CD8-positive, alpha-beta memory T cell (primary cell): ENCODE measurements at regions of chr11 and their contacts with region 1.

Region 1: DNA sequence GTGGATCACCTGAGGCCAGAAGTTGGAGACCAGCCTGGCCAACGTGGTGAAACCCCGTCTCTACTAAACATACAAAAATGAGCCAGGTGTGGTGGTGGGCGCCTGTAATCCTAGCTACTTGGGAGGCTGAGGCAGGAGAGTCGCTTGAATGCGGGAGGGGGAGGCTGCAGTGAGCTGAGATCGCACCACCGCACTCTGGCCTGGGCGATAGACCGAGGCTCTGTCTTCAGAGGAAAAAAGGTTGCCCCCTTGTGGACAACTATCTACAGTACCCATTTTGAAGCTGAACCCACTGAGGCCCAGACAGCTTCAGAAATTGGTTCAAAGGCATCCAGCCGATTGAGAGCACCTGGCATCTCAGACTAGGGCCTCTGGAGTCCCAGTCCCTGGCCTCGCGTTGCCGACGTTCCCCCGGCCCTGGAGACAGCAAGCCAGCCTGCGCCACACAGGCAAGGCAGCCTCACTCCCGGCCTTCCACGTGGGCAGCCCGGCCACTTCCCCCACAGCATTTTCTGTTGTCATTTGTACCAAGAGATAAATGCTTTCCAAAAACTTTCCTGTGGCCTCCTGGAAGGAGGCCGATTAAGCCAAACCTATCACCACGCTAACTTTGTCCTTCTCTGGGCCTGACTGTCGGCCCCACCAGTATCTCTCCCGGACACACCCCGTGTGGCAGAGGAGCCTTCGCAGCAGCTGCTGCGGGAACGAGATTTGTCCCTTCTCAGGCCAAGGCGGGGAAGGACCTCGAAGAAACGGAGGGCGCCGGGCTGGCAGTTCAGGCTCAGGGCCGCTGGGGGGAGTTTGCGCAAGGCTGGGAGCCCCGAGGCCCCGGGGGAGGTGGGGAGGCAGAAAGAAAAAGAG is 82.8 kb downstream of the FLI1 start:
- DNase-seq: peak in 4 of 5 donors; percentile 26 to 61 (median 34)
- H3K4me3 ChIP-seq: no peak overlapping the region
- H3K4me3 Mint-ChIP-seq: peak overlapping the region; percentile 2 to 83 (median 19)
- H3K27ac ChIP-seq: no peak overlapping the region
- H3K27ac Mint-ChIP-seq: peak overlapping the region; percentile 57 to 96 (median 91)
- H3K4me1 ChIP-seq: peaks cover 48% of the 10 kb centered on the region
- H3K4me1 Mint-ChIP-seq: peaks cover 70 to 91% (median 76%) of the 10 kb centered on the region in 3 donors
- H3K27me3 ChIP-seq: no peaks in the 10 kb centered on the region
- H3K27me3 Mint-ChIP-seq: peaks cover 0 to 1% of the 10 kb centered on the region in 2 donors

Region 2: DNA sequence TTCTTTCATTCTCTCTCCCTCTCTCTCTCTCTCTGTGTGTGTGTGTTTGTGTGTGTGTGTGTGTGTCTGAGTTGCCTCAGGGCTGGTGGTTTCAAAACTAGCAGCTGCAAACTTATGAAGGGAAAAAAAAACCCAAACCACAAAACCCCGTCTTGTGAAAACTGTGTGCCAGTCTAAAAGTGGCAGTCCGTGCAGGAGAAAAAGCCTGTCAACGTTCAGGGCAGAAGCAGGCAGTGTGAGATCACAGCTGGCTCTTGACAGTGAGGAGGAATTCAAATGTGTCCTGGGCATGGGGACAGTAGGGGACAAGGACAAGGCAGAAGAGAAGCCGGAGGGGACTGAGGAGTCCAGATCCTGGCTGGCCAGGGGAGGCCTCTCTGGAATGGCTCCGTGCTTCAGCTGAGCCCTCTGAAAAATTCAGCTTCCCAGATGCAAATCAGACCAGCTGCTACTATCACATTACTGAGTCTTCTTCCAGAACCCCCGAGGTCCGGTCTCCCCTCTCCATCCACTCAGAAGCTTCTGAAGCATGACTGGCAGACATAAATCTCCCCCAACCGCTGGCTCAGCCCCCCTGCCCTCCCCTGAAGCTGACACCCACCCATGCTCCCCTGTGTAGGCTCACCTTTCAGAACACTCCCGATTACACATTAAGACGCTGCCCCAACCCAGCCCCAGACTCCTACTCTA is 50.9 kb before region 1 on chr11:
- CTCF ChIA-PET with region 1: interaction called, 14 read pairs
- POLR2A ChIA-PET with region 1: interaction called, 3 read pairs
- DNase-seq: peak; percentile 33 to 88 (median 78)
- H3K4me3 ChIP-seq: peak overlapping the region; percentile 59
- H3K4me3 Mint-ChIP-seq: peak overlapping the region; percentile 80 to 89 (median 87)
- H3K27ac ChIP-seq: no peak overlapping the region
- H3K27ac Mint-ChIP-seq: peak overlapping the region; percentile 90 to 95 (median 92)
- H3K4me1 ChIP-seq: peaks cover 99% of the 10 kb centered on the region
- H3K4me1 Mint-ChIP-seq: peaks cover 98 to 100% (median 100%) of the 10 kb centered on the region in 3 donors
- H3K27me3 ChIP-seq: no peaks in the 10 kb centered on the region
- H3K27me3 Mint-ChIP-seq: peaks cover 0 to 11% of the 10 kb centered on the region in 2 donors

Region 3: DNA sequence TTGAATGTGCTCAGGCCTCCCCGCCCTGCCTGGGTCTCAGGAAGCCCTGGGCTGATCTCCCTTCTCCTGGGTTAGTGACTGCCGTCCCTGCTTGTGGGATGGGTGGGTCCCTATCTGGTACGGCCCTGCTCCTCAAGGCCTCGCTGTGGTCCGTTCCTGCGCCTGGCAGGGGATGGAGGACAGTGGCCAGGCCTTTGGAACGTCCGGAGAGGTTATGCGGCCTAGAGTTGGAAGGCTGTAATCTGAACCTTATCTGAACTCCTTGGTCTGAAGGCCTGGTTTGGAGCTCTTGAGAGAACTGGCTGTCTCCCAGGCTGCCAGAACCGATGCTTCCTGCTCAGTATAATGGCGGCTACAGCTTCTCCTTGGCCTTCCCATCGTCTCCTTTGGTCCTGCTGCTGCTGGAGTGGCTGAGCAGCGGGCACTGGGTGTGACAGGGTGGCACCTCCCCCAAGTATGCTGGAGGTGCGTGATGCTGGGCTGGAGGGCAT is 10.0 kb before region 1 on chr11:
- CTCF ChIA-PET with region 1: interaction called, 12 read pairs
- POLR2A ChIA-PET with region 1: no interaction called
- DNase-seq: no peak
- H3K4me3 ChIP-seq: no peak overlapping the region
- H3K4me3 Mint-ChIP-seq: no peak overlapping the region
- H3K27ac ChIP-seq: no peak overlapping the region
- H3K27ac Mint-ChIP-seq: peak overlapping the region in 3 of 8 donors; percentile 63 to 78 (median 77)
- H3K4me1 ChIP-seq: no peaks in the 10 kb centered on the region
- H3K4me1 Mint-ChIP-seq: peaks cover 37 to 72% (median 39%) of the 10 kb centered on the region in 3 donors
- H3K27me3 ChIP-seq: no peaks in the 10 kb centered on the region
- H3K27me3 Mint-ChIP-seq: no peaks in the 10 kb centered on the region